B cell (primary cell): ENCODE measurements at regions of chr7 and their contacts with region 1.

Region 1: DNA sequence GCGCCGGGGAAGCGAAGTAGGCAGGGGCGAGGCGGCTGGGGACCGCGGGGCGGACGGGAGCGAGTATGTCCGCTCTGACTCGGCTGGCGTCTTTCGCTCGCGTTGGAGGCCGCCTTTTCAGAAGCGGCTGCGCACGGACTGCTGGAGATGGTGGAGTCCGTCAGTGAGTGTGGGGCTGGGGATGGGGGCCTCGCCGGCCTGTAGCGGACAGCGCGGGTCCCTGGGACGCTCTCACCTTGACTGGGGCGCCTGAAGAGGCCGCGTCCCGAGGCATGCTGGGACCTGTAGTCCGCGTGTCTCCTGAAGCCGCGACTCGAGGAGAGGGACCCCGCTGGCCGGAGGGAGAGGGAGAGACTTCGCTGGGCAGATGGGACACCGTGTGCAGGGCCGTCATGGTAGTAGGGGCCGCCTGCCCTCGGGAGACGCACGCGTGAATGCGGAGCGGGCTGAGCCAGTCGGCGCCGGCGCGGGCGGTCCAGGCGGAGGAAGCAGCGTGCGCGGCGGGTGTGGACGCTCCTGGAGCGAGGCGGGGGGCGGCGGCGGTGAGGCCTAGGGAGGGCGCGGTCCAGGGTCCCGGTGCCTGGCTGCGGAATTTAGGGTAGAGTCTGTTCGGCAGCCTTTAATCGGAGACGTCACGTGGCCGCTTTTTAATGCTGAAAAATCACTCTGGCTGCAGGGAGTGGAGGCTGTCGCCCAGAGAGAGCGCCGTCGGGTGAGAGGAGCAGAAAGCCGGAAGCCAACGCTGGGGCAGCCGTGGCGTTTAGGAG is at the start of gene NDUFB2:
- DNase-seq: peak; percentile 93
- ATAC-seq: peak; percentile 85
- H3K4me3 ChIP-seq: peak within 1 kb of the TSS; percentile 55 to 97 (median 94)
- H3K4me3 Mint-ChIP-seq: peak within 1 kb of the TSS; percentile 99
- H3K27ac ChIP-seq: peak within 1 kb of the TSS; percentile 84
- H3K27ac Mint-ChIP-seq: peak within 1 kb of the TSS; percentile 97
- H3K4me1 ChIP-seq: peaks cover 15 to 21% of the 10 kb centered on the region in 2 donors
- H3K4me1 Mint-ChIP-seq: peaks cover 37% of the 10 kb centered on the region
- H3K27me3 ChIP-seq: no peaks in the 10 kb centered on the region
- H3K27me3 Mint-ChIP-seq: no peaks in the 10 kb centered on the region
- CTCF ChIP-seq: no peak
- total RNA-seq, gene NDUFB2: 67.9 and 77.3 TPM in 2 replicates

Region 2: GRCh38 chr7:140397784-140398750 is 298.8 kb before region 1 on chr7 and contains the start of gene SLC37A3:
- CTCF ChIA-PET with region 1: no interaction called
- POLR2A ChIA-PET with region 1: no interaction called
- intact Hi-C with region 1: loop called (anchors 2 kb)
- DNase-seq: peak; percentile 86
- ATAC-seq: peak; percentile 97
- H3K4me3 ChIP-seq: peak within 1 kb of the TSS; percentile 62 to 69 (median 67)
- H3K4me3 Mint-ChIP-seq: peak within 1 kb of the TSS; percentile 98
- H3K27ac ChIP-seq: peak within 1 kb of the TSS in 1 of 2 donors; percentile 75
- H3K27ac Mint-ChIP-seq: peak within 1 kb of the TSS; percentile 83
- H3K4me1 ChIP-seq: peaks cover 7 to 11% of the 10 kb centered on the region in 2 donors
- H3K4me1 Mint-ChIP-seq: peaks cover 13% of the 10 kb centered on the region
- H3K27me3 ChIP-seq: no peaks in the 10 kb centered on the region
- H3K27me3 Mint-ChIP-seq: peaks cover 3% of the 10 kb centered on the region
- CTCF ChIP-seq: no peak
- total RNA-seq, gene SLC37A3: 20.1 TPM in 2 replicates

Region 3: DNA sequence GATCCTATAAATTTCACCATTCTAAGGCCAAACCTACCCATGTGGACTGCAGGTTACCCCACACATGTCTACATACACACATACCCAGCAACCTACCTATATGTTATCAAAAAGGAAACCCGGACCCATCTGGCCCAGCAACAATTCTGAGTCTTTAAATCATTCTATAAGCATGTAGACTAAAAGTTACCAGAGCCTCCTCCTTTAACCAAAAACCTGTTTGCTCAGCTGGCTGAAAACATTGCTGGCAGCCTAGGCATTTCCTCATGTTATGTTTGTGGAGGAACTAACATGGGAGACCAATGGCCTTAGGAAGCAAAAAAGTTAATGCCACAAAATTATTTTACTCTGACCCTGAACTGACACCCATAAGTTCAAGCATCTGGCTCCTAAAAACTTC is 29.4 kb before region 1 on chr7:
- CTCF ChIA-PET with region 1: no interaction called
- POLR2A ChIA-PET with region 1: no interaction called
- intact Hi-C with region 1: no loop called
- DNase-seq: no peak
- ATAC-seq: no peak
- H3K4me3 ChIP-seq: no peak overlapping the region
- H3K4me3 Mint-ChIP-seq: no peak overlapping the region
- H3K27ac ChIP-seq: no peak overlapping the region
- H3K27ac Mint-ChIP-seq: no peak overlapping the region
- H3K4me1 ChIP-seq: peaks cover 4% of the 10 kb centered on the region in 2 donors
- H3K4me1 Mint-ChIP-seq: peaks cover 6% of the 10 kb centered on the region
- H3K27me3 ChIP-seq: no peaks in the 10 kb centered on the region
- H3K27me3 Mint-ChIP-seq: no peaks in the 10 kb centered on the region
- CTCF ChIP-seq: no peak